ENCODE measurements at regions of chr2 and their contacts with region 1.

Region 1: DNA sequence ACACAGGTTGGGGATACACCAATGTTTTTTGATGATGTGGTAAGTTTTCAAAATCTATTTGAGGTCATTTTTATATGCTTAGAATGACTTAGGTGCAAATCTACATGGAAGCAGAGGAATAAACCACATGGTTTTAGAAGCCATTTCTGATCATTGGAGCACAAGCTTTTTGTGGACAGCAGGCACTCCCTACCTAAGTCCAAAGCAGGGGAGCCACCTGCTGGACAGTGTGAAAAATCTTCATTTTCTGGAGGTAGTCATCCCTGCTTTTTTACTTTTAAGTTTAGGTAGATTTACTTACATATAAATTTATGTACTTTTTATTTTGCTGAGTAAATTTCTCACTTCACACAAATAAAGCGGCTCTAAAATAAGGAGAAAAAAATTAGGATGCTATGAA is 323.2 kb downstream of the PLCL1 start:
- DNase-seq: no peak
- H3K4me3 ChIP-seq: no peak overlapping the region
- H3K27ac ChIP-seq: no peak overlapping the region
- H3K4me1 ChIP-seq: no peaks in the 10 kb centered on the region
- H3K27me3 ChIP-seq: no peaks in the 10 kb centered on the region
- CTCF ChIP-seq: peak; percentile 29 to 77 (median 61)
- EP300 ChIP-seq: no peak
- POLR2A ChIP-seq: no peak
- RAD21 ChIP-seq: peak; percentile 92 to 93

Region 2: GRCh38 chr2:197804049-197804757 is 323.4 kb before region 1 on chr2 and contains the start of gene PLCL1:
- CTCF ChIA-PET with region 1: interaction called, 16 read pairs
- POLR2A ChIA-PET with region 1: no interaction called
- DNase-seq: peak; percentile 63 to 92
- H3K4me3 ChIP-seq: peak within 1 kb of the TSS; percentile 36 to 74 (median 54)
- H3K27ac ChIP-seq: no peak within 1 kb of the TSS
- H3K4me1 ChIP-seq: peaks cover 0 to 9% (median 2%) of the 10 kb centered on the region in 4 experiments; a peak in 3 of 7 replicates
- H3K27me3 ChIP-seq: peaks cover 9 to 22% (median 16%) of the 10 kb centered on the region in 4 experiments
- CTCF ChIP-seq: no peak; a peak in 1 of 4 replicates
- EP300 ChIP-seq: no peak
- POLR2A ChIP-seq: no peak
- RAD21 ChIP-seq: no peak
- total RNA-seq, gene PLCL1: not detected in 2 replicates

Region 3: DNA sequence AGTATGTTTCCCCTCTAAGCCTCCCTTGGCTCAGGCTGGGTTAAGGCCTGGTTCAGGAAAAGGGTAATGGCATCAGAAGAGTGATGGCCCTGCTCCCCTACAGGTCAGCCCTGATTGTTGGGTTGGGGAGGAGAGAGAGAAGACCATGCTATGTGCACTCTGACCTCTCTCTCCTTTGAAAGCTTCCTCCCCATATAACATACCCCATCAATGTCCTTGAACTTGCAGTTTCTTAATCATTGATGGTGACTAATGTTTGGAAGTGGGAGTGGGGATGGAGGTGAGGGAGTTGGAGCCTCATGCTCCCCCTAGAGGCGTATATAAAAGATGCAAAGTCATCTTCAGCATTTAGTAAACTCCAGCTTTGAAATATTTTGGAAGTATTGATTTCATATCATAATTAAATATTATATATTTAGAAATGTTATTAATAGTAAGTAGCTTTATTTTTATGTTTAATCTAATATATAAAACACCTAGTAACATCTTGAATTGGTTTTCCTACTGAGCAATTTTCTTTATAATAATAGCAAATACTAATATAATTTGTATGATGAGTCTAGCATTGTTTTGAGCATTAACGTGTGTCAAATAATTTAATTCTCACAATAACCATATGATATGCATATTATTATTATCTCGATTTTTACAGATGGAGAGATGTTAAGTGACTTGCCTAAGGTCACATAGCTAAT is 314.4 kb before region 1 on chr2:
- CTCF ChIA-PET with region 1: interaction called, 18 read pairs
- POLR2A ChIA-PET with region 1: no interaction called
- DNase-seq: no peak
- H3K4me3 ChIP-seq: no peak overlapping the region
- H3K27ac ChIP-seq: no peak overlapping the region
- H3K4me1 ChIP-seq: no peaks in the 10 kb centered on the region
- H3K27me3 ChIP-seq: no peaks in the 10 kb centered on the region
- CTCF ChIP-seq: peak; percentile 38 to 53 (median 45); a peak in 3 of 4 replicates
- EP300 ChIP-seq: no peak
- POLR2A ChIP-seq: no peak
- RAD21 ChIP-seq: peak; percentile 21 to 44; a peak in 3 of 4 replicates

Region 4: DNA sequence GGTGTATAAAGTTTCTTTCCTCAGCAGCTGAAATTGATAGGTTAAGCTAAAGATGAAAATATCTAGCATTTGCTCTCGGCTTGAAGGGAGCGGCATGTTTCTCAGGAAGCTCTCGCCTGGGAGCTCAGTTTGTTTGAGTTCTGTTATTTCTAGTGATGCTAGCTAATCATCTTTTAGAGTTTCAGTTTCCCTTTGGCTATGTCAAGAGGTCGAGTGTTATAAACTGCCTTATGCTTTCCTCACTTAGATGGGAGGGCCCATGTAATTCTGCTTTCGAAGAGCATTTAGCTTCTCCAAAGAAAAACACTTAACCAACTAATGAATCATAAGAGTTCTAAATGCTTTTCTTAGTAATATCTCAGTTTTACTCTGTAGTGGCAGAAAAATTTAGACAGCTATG is 289.6 kb before region 1 on chr2:
- CTCF ChIA-PET with region 1: interaction called, 14 read pairs
- POLR2A ChIA-PET with region 1: no interaction called
- DNase-seq: no peak
- H3K4me3 ChIP-seq: no peak overlapping the region
- H3K27ac ChIP-seq: no peak overlapping the region
- H3K4me1 ChIP-seq: no peaks in the 10 kb centered on the region
- H3K27me3 ChIP-seq: no peaks in the 10 kb centered on the region
- CTCF ChIP-seq: no peak
- EP300 ChIP-seq: no peak
- POLR2A ChIP-seq: no peak
- RAD21 ChIP-seq: no peak

Region 5: GRCh38 chr2:198113316-198113715 is 14.3 kb before region 1 on chr2:
- CTCF ChIA-PET with region 1: interaction called, 24 read pairs
- POLR2A ChIA-PET with region 1: no interaction called
- DNase-seq: no peak
- H3K4me3 ChIP-seq: no peak overlapping the region
- H3K27ac ChIP-seq: no peak overlapping the region
- H3K4me1 ChIP-seq: peaks cover 0 to 2% (median 0%) of the 10 kb centered on the region in 4 experiments; a peak in 3 of 7 replicates
- H3K27me3 ChIP-seq: no peaks in the 10 kb centered on the region
- CTCF ChIP-seq: no peak
- EP300 ChIP-seq: no peak
- POLR2A ChIP-seq: no peak
- RAD21 ChIP-seq: no peak

Region 6: DNA sequence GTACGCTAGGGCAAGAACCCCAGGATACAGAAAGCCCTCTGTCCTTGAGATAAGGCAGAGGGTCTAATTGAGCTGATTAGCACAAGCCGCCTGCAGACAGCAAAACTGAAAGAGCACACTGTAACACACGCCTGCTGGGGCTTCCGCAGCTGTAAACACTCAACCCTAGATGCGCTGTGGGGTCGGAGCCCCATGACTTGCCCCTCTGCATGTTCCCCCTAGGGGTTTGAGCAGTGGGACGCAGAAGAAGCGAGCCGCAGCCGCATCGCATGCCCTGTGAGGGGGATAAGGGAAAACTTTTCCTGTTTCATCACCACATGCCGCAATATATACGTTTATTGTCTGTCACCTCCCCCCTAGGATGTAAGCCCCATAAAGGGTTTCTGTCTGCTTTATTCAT is 61.4 kb after region 1 on chr2:
- CTCF ChIA-PET with region 1: no interaction called
- POLR2A ChIA-PET with region 1: no interaction called
- DNase-seq: no peak
- H3K4me3 ChIP-seq: no peak overlapping the region
- H3K27ac ChIP-seq: no peak overlapping the region
- H3K4me1 ChIP-seq: no peaks in the 10 kb centered on the region
- H3K27me3 ChIP-seq: no peaks in the 10 kb centered on the region
- CTCF ChIP-seq: no peak
- EP300 ChIP-seq: no peak
- POLR2A ChIP-seq: no peak
- RAD21 ChIP-seq: no peak

Region 7: GRCh38 chr2:198296665-198297308 is 169.2 kb after region 1 on chr2:
- CTCF ChIA-PET with region 1: interaction called, 34 read pairs
- POLR2A ChIA-PET with region 1: no interaction called
- DNase-seq: peak; percentile 53 to 70
- H3K4me3 ChIP-seq: peak overlapping the region in 1 of 4 experiments; percentile 44; a peak in 1 of 8 replicates
- H3K27ac ChIP-seq: no peak overlapping the region
- H3K4me1 ChIP-seq: no peaks in the 10 kb centered on the region
- H3K27me3 ChIP-seq: no peaks in the 10 kb centered on the region
- CTCF ChIP-seq: peak; percentile 39 to 82 (median 69)
- EP300 ChIP-seq: no peak
- POLR2A ChIP-seq: no peak
- RAD21 ChIP-seq: peak; percentile 94 to 97